ENCODE measurements at regions of chr5 and their contacts with region 1.

Region 1: DNA sequence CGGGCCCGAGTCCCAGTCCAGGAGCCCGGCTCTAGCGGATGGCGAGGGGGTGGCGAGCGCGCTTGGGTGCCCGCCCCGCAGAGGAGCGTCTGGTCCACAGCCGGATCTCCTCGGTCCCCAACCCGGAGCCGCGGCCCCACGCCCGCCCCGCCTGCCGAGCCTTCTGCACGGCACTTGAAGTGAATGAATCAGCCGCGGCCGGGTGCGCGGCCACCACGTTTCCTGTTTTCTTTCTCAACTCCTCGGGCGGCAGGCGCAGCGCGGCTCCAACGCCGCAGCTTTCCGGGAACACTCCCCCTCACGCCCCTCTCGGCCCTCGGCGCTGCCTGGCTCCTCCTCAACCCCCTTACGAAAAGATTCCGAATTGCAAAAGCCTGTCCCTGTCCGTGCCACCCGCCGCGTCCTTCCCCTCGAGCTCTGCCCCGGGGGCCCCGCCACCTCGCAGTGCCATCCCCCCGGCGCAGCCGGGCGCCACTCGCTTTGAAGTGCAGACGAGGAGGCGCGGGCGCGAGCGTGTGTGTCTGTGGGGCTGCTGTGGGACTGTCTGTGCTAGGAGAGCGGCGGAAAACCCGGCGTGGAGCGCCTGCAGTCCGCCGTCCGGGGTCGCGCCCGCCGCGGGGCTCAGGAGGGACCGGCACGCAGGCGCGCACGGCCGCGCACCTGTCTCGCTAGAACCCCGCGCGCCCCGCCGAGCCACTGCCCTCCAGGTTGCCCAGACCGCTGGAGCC is 456.6 kb downstream of the RAB3C start:
- DNase-seq: peak; percentile 97
- H3K4me3 ChIP-seq: peak overlapping the region; percentile 69 to 77 (median 73)
- H3K27ac ChIP-seq: peak overlapping the region; percentile 74 to 83 (median 78)
- H3K4me1 ChIP-seq: peaks cover 18 to 75% (median 53%) of the 10 kb centered on the region in 4 donors
- H3K27me3 ChIP-seq: no peaks in the 10 kb centered on the region
- CTCF ChIP-seq: no peak
- EP300 ChIP-seq: no peak
- POLR2A ChIP-seq: peak; percentile 31

Region 2: DNA sequence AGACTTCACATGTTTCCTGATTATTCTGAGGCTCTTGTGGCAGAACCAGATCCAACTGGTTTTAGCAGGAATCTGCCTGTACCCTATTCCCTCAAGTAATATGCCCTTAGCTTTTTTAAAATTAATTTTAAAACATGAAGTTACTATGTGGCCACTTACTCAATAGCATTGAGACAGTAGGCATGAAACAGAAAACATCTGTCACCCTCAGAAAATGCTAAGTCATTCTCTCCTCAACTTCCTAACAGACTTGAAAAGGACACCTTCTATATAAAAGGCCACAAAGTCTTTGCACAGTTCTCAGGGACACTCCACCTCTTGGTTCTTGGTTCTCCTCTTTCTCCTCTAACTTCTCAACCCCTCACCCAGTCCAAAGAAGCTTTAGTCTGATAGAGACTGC is 178.8 kb before region 1 on chr5:
- intact Hi-C with region 1: no loop called
- DNase-seq: no peak
- H3K4me3 ChIP-seq: no peak overlapping the region
- H3K27ac ChIP-seq: no peak overlapping the region
- H3K4me1 ChIP-seq: no peaks in the 10 kb centered on the region
- H3K27me3 ChIP-seq: no peaks in the 10 kb centered on the region
- CTCF ChIP-seq: no peak
- EP300 ChIP-seq: no peak
- POLR2A ChIP-seq: no peak

Region 3: GRCh38 chr5:59116231-59116865 is 76.9 kb after region 1 on chr5:
- intact Hi-C with region 1: no loop called
- DNase-seq: no peak
- H3K4me3 ChIP-seq: no peak overlapping the region
- H3K27ac ChIP-seq: no peak overlapping the region
- H3K4me1 ChIP-seq: peaks cover 0 to 11% (median 3%) of the 10 kb centered on the region in 4 donors
- H3K27me3 ChIP-seq: no peaks in the 10 kb centered on the region
- CTCF ChIP-seq: no peak
- EP300 ChIP-seq: no peak
- POLR2A ChIP-seq: no peak

Region 4: GRCh38 chr5:59126708-59127573 is 87.5 kb after region 1 on chr5:
- intact Hi-C with region 1: loop called (anchors 5 kb)
- DNase-seq: no peak
- H3K4me3 ChIP-seq: peak overlapping the region; percentile 41 to 58 (median 50)
- H3K27ac ChIP-seq: peak overlapping the region; percentile 74 to 83 (median 80)
- H3K4me1 ChIP-seq: peaks cover 21 to 60% (median 46%) of the 10 kb centered on the region in 4 donors
- H3K27me3 ChIP-seq: no peaks in the 10 kb centered on the region
- CTCF ChIP-seq: no peak
- EP300 ChIP-seq: no peak
- POLR2A ChIP-seq: no peak

Region 5: DNA sequence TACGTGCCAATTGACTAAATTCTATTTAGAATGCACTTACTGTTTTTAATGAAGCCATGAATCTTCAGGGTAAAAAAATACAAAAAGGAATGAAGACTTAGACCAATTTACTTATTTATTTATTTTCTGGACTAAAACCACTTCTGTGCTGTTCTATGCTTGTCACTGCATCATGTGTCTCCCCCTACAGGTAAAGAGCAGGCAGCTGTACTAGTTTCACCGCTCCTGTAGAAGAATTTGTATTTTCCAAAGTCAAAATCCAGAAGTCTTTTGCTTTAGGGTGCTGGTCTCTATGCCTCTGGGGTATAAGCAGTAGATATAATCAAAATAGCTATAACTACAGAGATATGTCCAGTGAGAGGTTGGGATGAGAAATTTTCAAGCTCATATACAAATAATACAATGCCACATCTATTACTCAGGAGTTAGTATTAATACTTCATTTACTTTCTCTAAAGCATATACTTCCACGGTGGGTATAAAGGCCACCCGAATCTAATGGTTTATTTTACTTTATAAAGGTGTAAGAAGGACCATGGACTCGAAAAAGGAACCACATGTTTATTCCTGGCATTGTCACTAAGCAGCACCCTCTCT is 134.9 kb after region 1 on chr5:
- intact Hi-C with region 1: loop called (anchors 5 kb)
- DNase-seq: no peak
- H3K4me3 ChIP-seq: no peak overlapping the region
- H3K27ac ChIP-seq: no peak overlapping the region
- H3K4me1 ChIP-seq: peaks cover 0 to 7% (median 4%) of the 10 kb centered on the region in 4 donors
- H3K27me3 ChIP-seq: no peaks in the 10 kb centered on the region
- CTCF ChIP-seq: peak; percentile 77 to 83 (median 77)
- EP300 ChIP-seq: no peak
- POLR2A ChIP-seq: no peak